Right ventricle myocardium inferior (tissue), 1 donor: ENCODE measurements at regions of chr2 and their contacts with region 1.

Region 1: DNA sequence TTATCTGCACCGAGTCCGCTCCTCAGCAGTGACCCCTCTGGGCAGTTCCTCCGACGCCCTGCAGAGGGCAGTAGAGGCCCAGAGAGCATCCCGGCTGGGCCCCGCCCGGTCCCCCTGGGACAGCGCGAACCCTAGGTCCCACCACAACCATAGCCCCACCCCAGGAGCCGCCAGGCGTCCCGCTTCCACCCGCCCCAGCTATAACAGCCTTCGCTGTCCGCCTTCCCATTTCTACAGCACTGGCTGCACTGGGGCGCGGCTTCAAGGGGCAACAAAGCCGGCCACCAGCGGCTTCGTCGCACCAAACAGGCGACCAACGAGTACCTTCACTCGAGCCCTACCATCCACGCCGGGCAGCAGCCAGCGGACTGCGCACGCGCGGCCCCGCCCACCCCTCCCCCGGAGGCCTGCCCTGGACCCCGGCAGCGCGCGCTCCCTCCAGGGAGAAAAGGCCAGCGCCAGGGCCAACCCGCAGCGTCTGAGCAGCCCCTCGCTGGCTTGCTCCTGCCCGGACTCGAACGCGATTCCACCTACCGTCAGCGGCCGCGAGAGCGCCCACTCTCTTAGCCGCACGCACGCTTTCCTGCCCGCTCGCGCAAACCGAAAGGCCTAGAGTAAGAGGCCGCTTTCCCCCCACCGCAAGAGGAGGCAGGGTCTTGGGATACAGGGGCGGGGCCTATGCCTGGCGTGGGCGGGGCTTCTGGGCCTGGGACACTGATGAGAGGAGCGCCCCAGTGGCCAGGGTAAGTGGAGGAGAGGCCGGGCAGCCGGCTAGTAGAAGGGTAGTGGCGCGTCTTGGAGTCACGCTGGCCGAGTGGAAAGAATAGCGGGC is at the start of gene NHEJ1:
- DNase-seq: peak; percentile 98
- ATAC-seq: peak; percentile 98
- total RNA-seq, gene NHEJ1: 9.7 TPM

Region 2: GRCh38 chr2:219029829-219030165 is 130.6 kb before region 1 on chr2:
- intact Hi-C with region 1: loop called (anchors 1 kb)
- DNase-seq: peak; percentile 89
- ATAC-seq: peak; percentile 84

Region 3: DNA sequence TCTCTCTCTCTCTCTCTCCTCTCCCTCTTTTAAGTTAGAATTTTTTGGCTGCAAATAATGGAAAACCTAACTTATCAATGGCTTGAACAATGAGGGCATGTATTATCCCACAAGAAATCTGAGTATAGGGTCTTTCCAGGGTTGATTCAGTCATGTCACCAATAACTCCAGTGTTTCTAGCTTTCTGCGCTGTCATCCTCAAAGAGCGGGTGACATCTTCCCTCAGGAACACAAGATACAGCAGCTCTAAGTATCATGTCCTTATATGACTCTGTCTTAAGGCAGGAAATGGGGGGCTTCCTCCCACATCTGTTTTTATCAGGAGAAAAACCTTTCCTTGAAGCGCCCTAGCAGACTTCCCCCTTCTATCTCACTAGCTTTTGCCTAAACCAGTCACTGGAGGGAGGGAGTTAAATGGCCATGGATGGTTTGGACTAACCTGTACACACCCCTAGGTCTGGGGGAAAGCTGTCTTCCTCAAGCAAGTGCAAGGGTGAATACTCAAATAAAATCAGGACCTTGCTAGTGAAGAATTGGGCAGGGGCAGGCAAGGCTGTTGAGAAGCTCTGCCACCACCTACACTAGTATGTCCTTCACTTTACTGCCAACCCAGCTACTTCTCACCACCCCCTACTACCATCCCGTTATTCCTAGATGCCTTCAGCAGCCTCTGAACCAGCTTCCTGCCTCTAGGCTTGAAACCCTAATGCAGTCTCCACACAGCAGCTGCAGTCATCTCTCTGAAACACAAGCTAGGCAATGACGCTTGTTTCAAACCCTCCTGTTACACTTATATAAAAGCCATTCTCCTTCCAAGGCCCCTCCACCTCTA is 100.8 kb after region 1 on chr2:
- intact Hi-C with region 1: no loop called
- DNase-seq: no peak
- ATAC-seq: no peak

Region 4: GRCh38 chr2:219294356-219295351 is 134.3 kb after region 1 on chr2:
- intact Hi-C with region 1: loop called (anchors 1 kb)
- DNase-seq: peak; percentile 96
- ATAC-seq: peak; percentile 92

Region 5: DNA sequence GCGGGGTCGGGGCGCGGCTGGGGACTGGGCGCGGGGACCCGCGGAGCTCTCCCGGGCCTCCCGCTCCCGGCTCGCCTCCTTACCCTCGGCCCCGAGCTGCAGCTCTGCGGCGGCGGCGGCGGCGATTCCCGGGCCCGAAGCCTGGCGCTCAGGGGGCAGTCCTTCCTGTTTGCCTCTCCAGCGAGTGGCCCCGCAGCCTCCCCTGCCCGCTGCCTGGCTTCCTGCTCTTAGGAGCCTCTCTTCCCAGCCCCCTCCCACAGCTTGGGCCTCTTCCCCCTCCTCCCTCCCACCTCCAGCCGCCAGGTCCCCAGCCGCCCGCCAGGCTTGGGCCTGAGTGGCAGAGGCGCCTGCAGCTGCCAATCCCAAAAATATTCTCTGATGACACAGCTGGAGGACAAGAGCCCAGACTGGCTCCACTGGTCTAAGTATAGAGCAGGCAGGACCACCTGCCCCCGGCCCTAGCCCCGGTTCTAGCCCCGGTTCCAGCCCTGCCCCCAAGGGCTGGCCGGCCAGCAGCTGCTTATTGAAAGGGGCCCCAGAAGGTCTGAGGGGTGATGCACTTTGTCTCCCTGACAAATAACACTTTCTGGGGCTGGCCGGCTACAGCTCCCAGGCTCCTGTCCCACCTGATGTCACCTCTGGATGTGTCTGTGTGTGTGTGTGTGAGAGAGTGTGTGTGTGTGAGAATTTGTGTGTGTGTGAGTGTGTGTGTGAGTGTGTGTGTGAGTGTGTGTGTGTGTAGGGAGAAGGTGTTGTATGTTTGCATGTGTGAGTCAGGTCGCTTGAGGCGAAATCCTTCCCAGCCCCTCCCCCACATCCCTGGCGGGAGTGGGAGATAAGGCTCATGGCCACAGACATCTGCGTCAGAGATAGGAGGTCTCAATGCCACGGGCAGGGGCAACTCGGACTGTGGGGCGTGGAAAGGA is 411.2 kb after region 1 on chr2 and contains the start of gene OBSL1:
- intact Hi-C with region 1: no loop called
- DNase-seq: peak; percentile 85
- ATAC-seq: peak; percentile 88
- total RNA-seq, gene OBSL1: 158 TPM